Heart left ventricle (tissue), 16 donors: ENCODE measurements at regions of chr2 and their contacts with region 1.

Region 1: GRCh38 chr2:105789745-105790460 is 45.2 kb downstream of the NCK2 start:
- DNase-seq: peak in 4 of 5 donors; percentile 47 to 66 (median 63)
- ATAC-seq: peak; percentile 80 to 91 (median 88)
- H3K4me3 ChIP-seq: peak overlapping the region in 5 of 12 donors; percentile 16 to 31 (median 28)
- H3K27ac ChIP-seq: peak overlapping the region in 8 of 12 donors; percentile 18 to 63 (median 48)
- H3K4me1 ChIP-seq: peaks cover 9 to 90% (median 51%) of the 10 kb centered on the region in 12 donors
- H3K27me3 ChIP-seq: no peaks in the 10 kb centered on the region
- CTCF ChIP-seq: peak in 3 of 12 donors; percentile 22 to 32 (median 29)
- POLR2A ChIP-seq: no peak

Region 2: GRCh38 chr2:105749583-105750400 is 40.1 kb before region 1 on chr2:
- intact Hi-C with region 1: loop called in 2 of 10 experiments (anchors 5 kb)
- DNase-seq: no peak
- ATAC-seq: peak in 1 of 4 donors; percentile 45
- H3K4me3 ChIP-seq: no peak overlapping the region
- H3K27ac ChIP-seq: peak overlapping the region in 1 of 12 donors; percentile 47
- H3K4me1 ChIP-seq: peaks cover 6 to 84% (median 55%) of the 10 kb centered on the region in 12 donors
- H3K27me3 ChIP-seq: no peaks in the 10 kb centered on the region
- CTCF ChIP-seq: no peak
- POLR2A ChIP-seq: no peak

Region 3: GRCh38 chr2:106020821-106021661 is 231.1 kb after region 1 on chr2:
- intact Hi-C with region 1: loop called in 1 of 10 experiments (anchors 10 kb)
- DNase-seq: peak in 4 of 5 donors; percentile 29 to 49 (median 38)
- ATAC-seq: peak in 2 of 4 donors; percentile 29 to 32
- H3K4me3 ChIP-seq: no peak overlapping the region
- H3K27ac ChIP-seq: peak overlapping the region in 7 of 12 donors; percentile 0 to 68 (median 8)
- H3K4me1 ChIP-seq: peaks cover under 1 to 36% (median 15%) of the 10 kb centered on the region in 12 donors
- H3K27me3 ChIP-seq: no peaks in the 10 kb centered on the region
- CTCF ChIP-seq: no peak
- POLR2A ChIP-seq: no peak

Region 4: DNA sequence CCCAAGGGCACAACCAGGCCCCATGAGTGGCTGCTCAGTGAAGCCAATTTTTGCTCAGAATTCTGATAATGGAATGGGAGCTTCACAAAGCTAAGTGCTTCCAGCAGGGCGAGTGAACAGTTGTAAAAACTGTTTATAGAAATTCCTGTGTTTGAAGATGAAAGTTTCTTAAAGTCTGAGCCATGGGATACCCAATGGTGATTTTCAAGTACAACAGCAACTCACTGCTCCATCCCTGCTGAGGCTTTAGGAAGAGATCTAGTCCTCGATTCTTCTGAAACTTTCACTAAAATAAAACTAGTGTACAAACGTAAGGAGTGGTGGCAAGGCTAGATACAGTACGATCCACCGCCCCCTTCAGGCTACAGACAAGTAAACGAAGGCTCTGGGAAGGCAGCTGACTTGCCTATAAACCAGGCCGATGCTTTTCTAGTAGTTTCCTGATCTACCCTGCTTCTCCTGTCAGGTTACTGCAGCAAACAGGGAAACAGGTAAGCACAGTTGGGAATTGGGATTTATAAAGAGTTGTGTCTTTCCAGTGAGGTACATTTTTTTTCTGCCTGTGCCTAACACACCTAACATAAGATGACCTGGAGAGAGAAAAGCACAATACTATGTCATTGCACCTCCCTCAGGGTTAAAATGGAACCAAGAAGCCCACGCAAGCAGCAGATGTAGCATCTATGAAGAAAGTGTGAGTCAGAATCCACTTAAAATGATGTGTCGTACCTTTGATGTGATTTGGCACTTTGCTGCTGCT is 295.5 kb after region 1 on chr2:
- intact Hi-C with region 1: loop called in 1 of 10 experiments (anchors 10 kb)
- DNase-seq: peak in 3 of 5 donors; percentile 48 to 55 (median 51)
- ATAC-seq: peak in 3 of 4 donors; percentile 61 to 84 (median 72)
- H3K4me3 ChIP-seq: no peak overlapping the region
- H3K27ac ChIP-seq: peak overlapping the region in 1 of 12 donors; percentile 7
- H3K4me1 ChIP-seq: peaks cover 0 to 7% (median 0%) of the 10 kb centered on the region in 12 donors
- H3K27me3 ChIP-seq: no peaks in the 10 kb centered on the region
- CTCF ChIP-seq: peak; percentile 19 to 67 (median 47)
- POLR2A ChIP-seq: no peak